ENCODE measurements at regions of chr11 and their contacts with region 1.

Region 1: DNA sequence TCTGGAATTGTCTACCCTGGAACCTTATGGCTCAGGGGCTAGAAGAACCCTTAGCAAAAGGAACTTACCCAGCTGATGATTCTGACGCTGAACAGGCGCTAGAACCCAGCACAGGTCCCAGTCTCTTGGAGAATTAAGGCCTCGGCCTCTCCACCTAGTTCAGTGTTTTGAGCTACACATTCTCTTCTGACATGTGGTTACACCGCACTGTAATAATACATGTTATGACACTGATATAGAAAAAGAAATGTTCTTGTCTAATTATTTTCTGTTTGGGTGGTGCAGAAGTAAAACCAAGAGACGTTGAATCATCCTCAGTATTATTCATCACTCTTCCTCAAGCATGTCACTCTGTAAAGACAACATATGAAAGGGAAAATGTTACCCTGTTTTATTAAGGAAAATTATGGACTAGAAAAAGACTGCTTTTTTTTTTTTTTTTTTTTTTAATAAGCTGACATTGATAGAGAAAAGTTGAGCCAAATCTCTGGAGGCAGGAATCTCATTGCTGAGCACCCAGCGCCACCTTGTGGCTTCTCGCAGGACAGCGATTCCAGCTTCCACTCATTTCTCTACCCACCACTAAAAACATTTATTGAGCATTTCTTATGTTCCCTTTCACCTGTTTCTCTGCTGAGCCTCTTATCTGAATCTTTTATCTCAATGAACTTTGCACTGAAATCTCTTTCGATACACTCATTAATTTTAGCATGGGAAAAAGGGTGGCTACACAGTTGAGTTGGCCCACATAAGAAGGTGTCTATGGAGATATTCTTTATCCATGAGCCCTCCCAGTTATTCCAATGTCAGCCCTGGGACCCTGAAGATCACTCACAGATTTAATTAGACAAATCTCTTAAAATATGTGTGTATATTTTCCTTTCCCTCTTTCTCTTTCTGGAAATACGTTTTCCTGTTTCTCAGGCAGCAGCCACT is 12.6 kb upstream of the APLNR start:
- DNase-seq: peak; percentile 86

Region 2: DNA sequence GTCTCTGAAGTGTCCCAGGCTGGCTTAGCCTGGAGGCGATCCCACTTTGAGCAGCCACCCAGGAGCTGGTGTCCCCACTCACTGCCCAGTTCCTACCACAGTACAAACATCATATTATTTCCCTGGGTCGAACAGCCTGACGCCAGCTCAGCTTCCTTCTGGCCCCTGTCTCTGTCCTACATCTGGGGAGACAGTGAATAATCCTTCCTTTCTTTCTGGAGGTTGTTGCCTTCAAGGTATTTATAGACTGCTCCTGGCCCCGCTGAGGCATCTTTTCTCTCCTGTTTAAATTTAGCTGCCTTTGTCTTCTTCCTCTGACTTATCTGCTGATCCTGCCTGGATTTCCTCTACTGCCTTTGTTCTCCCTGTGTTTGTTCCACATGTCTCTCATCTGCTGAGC is 124.7 kb before region 1 on chr11:
- intact Hi-C with region 1: loop called (anchors 10 kb)
- DNase-seq: no peak